CD4-positive, alpha-beta T cell (primary cell): ENCODE measurements at regions of chr15 and their contacts with region 1.

Region 1: DNA sequence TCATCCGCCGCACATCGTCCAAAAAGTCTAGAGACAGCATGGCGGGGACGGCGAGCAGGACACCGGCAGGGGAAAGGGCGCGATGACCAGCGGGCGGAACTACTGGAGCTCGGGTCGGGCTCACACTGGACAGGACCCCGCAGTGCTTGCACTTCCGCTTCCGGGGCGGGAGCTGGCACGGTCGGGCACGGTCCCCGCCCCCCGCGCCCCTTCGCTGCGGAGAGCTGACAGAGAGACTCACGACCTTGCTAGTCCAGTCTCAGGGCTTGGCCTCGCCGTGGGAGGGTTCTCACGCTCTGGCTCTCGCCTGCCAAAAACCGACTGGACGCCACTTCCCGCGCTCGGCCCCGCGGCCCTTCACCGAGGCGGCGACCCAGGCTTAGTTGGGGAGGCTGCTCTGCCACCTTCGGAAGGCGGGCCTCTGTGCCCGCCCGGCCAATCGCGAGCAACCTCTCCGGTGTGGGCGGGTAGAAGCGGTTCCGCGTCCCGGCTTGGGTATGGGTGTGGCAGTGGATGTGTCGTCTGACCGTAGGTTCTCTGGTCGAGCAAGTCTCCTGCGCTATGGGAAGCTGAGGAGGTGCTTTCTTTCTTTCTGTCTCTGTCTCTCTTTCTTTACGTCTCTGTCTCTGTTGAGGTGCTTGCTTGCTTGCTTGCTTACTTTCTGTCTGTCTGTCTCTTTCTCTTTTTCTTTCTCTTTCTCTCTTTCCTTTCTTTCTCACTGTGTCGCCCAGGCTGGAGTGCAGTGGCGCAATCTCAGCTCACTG is at the start of gene SEC11A:
- DNase-seq: peak; percentile 83 to 95 (median 89)
- ATAC-seq: peak; percentile 95
- H3K4me3 ChIP-seq: peak within 1 kb of the TSS; percentile 99
- H3K4me3 Mint-ChIP-seq: peak within 1 kb of the TSS; percentile 93
- H3K27ac ChIP-seq: peak within 1 kb of the TSS; percentile 70 to 74
- H3K27ac Mint-ChIP-seq: peak within 1 kb of the TSS; percentile 95
- H3K4me1 ChIP-seq: peaks cover 46% of the 10 kb centered on the region
- H3K4me1 Mint-ChIP-seq: peaks cover 60% of the 10 kb centered on the region
- H3K27me3 ChIP-seq: no peaks in the 10 kb centered on the region
- H3K27me3 Mint-ChIP-seq: no peaks in the 10 kb centered on the region
- CTCF ChIP-seq: no peak
- total RNA-seq, gene SEC11A: 44.1 to 47.0 TPM

Region 2: DNA sequence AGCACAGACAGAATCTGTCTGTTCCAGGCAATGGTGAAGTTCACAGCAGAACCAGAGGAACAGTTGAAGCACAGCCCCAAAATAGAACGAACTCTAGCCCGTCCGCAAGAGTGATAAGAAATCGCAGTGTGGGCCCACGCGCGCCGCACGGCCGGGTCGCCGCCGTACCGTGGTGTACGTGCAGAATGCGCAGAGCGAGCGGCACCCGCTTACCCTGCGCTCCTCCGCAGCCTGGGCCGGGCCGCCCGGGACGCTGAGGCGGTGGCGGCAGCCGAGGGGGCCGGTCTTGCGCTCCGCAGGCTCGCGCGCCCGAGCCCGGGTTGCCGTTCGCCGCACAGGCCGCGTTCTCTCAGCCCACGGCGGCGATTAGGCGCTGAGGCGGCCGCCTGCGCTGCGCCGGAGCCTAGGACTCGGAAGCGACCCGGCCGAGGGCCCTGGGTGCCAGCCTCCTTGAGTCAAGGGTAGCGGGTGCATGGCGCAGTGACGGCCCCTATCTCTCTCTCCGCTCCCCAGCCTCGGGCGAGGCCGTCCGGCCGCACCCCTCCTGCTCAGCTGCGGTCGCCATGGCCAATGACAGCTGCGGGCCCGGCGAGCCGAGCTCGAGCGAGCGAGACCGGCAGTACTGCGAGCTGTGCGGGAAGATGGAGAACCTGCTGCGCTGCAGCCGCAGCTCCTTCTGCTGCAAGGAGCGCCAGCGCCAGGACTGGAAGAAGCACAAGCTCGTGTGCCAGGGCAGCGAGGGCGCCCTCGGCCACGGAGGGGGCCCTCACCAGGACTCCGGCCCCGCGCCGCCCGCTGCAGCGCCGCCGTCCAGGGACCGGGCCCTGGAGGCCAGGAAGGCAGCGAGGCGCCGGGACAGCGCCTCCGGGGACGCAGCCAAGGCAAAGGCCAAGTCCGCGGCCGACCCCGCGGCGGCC is 82.6 kb before region 1 on chr15:
- CTCF ChIA-PET with region 1: interaction called, 5 read pairs
- POLR2A ChIA-PET with region 1: interaction called, 15 read pairs
- intact Hi-C with region 1: no loop called
- DNase-seq: peak; percentile 43 to 85 (median 60)
- ATAC-seq: peak; percentile 41
- H3K4me3 ChIP-seq: peak overlapping the region; percentile 69
- H3K4me3 Mint-ChIP-seq: peak overlapping the region; percentile 96
- H3K27ac ChIP-seq: peak overlapping the region; percentile 29 to 61
- H3K27ac Mint-ChIP-seq: peak overlapping the region; percentile 92
- H3K4me1 ChIP-seq: peaks cover 41% of the 10 kb centered on the region
- H3K4me1 Mint-ChIP-seq: peaks cover 52% of the 10 kb centered on the region
- H3K27me3 ChIP-seq: no peaks in the 10 kb centered on the region
- H3K27me3 Mint-ChIP-seq: no peaks in the 10 kb centered on the region
- CTCF ChIP-seq: no peak

Region 3: GRCh38 chr15:84697236-84697990 is 18.8 kb before region 1 on chr15:
- CTCF ChIA-PET with region 1: interaction called, 3 read pairs
- POLR2A ChIA-PET with region 1: interaction called, 16 read pairs
- intact Hi-C with region 1: loop called in 1 of 2 experiments (anchors 2 kb)
- DNase-seq: no peak
- ATAC-seq: no peak
- H3K4me3 ChIP-seq: no peak overlapping the region
- H3K4me3 Mint-ChIP-seq: no peak overlapping the region
- H3K27ac ChIP-seq: no peak overlapping the region
- H3K27ac Mint-ChIP-seq: peak overlapping the region; percentile 31
- H3K4me1 ChIP-seq: peaks cover 19% of the 10 kb centered on the region
- H3K4me1 Mint-ChIP-seq: peaks cover 53% of the 10 kb centered on the region
- H3K27me3 ChIP-seq: no peaks in the 10 kb centered on the region
- H3K27me3 Mint-ChIP-seq: no peaks in the 10 kb centered on the region
- CTCF ChIP-seq: no peak

Region 4: DNA sequence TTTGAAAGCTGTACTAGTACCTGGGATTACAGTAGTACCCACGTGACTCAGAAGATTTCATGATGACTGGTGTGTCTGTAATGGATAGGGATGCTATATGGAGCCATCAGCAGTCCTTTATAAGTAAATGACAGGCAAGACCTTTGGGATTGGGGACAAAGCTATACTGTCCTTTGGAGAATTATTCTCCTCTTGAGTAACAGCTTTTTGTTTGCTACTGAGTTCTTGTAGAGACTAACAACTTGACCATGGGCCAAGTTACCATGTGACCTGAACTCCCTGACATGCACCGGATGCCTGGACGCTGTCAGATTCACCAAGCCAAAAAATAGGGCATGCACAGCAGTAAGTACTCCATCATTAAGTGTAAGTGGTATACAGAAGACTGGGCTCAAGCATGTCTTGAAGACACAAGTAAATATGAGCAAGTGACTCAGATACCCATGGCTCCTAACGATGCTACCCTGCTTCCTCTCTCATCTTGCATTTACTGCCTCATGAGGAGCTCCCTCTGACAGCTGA is 13.2 kb before region 1 on chr15:
- CTCF ChIA-PET with region 1: interaction called, 3 read pairs
- POLR2A ChIA-PET with region 1: interaction called, 20 read pairs
- intact Hi-C with region 1: loop called in 1 of 2 experiments (anchors 2 kb)
- DNase-seq: peak in 1 of 14 experiments; percentile 21
- ATAC-seq: no peak
- H3K4me3 ChIP-seq: no peak overlapping the region
- H3K4me3 Mint-ChIP-seq: no peak overlapping the region
- H3K27ac ChIP-seq: no peak overlapping the region
- H3K27ac Mint-ChIP-seq: peak overlapping the region; percentile 63
- H3K4me1 ChIP-seq: peaks cover 39% of the 10 kb centered on the region
- H3K4me1 Mint-ChIP-seq: peaks cover 67% of the 10 kb centered on the region
- H3K27me3 ChIP-seq: no peaks in the 10 kb centered on the region
- H3K27me3 Mint-ChIP-seq: no peaks in the 10 kb centered on the region
- CTCF ChIP-seq: no peak

Region 5: GRCh38 chr15:84734794-84735479 is 18.7 kb after region 1 on chr15:
- CTCF ChIA-PET with region 1: interaction called, 7 read pairs
- POLR2A ChIA-PET with region 1: interaction called, 232 read pairs
- intact Hi-C with region 1: loop called (anchors 1 kb)
- DNase-seq: peak; percentile 40 to 91 (median 64)
- ATAC-seq: peak; percentile 86
- H3K4me3 ChIP-seq: peak overlapping the region; percentile 34
- H3K4me3 Mint-ChIP-seq: peak overlapping the region; percentile 84
- H3K27ac ChIP-seq: peak overlapping the region; percentile 46 to 70
- H3K27ac Mint-ChIP-seq: peak overlapping the region; percentile 91
- H3K4me1 ChIP-seq: peaks cover 51% of the 10 kb centered on the region
- H3K4me1 Mint-ChIP-seq: peaks cover 51% of the 10 kb centered on the region
- H3K27me3 ChIP-seq: no peaks in the 10 kb centered on the region
- H3K27me3 Mint-ChIP-seq: no peaks in the 10 kb centered on the region
- CTCF ChIP-seq: no peak

Region 6: DNA sequence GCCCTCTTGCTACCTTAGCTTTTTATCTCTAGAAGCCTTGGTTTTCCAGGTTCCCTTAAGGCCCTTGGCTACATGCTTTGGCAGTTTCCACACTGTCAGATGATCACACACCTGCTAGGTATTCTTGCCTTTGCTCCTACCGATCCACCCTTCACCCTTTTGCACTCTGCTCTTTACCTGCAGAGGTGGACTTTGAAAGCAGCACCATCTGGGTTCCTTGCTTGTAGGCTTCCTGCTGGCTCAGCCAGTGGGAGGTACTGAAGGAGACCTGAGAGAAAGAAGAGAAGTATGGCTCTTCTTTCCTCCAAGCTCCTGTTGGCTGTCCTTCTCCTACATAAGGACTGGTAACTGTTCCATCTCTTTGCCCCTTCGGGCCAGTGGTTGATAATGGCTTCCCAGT is 24.9 kb after region 1 on chr15:
- CTCF ChIA-PET with region 1: interaction called, 7 read pairs
- POLR2A ChIA-PET with region 1: interaction called, 311 read pairs
- intact Hi-C with region 1: no loop called
- DNase-seq: no peak
- ATAC-seq: no peak
- H3K4me3 ChIP-seq: no peak overlapping the region
- H3K4me3 Mint-ChIP-seq: no peak overlapping the region
- H3K27ac ChIP-seq: no peak overlapping the region
- H3K27ac Mint-ChIP-seq: peak overlapping the region; percentile 10
- H3K4me1 ChIP-seq: peaks cover 17% of the 10 kb centered on the region
- H3K4me1 Mint-ChIP-seq: peaks cover 57% of the 10 kb centered on the region
- H3K27me3 ChIP-seq: no peaks in the 10 kb centered on the region
- H3K27me3 Mint-ChIP-seq: no peaks in the 10 kb centered on the region
- CTCF ChIP-seq: no peak